CD4-positive, alpha-beta T cell (primary cell): ENCODE measurements at regions of chr11 and their contacts with region 1.

Region 1: DNA sequence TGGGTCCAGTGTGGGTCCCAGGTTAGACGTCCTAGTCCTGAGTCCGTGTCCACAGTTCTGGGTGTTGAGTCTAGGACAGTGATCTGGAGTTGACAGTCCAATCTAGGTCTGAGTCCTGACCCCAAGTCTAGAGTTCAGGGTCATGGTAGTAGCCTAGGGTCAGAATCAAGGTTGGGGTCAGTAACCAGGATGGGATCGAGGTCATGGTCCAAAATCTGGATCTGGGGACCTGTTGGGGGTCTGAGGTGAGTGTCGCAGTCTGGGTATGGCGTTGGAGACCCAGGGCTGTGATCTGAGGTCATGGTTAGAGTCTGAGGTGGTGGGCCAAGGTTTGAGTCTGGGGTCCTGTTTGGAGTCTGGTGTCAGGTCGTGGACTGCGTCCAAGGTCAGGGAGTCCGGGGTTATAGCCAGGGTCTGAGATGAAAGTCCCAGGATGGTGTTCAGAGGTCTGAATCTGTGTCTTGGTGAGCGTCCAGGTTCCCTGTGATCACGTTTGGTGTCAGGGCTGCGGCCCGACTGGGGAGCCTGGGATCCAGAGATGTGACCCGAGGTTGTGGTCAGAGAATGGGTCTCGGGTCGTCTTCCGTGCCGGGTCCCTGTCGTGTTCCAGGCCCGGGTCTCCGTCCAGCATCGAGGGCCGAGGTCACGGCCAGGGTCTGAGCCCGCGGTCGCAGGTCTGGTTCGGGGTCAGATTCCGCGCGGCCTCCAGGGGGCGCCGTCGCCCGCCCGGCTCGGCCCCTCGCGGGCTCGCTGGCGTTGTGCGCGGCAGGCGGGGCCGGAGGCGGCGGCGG is 445 bp upstream of the GRK2 start:
- DNase-seq: peak; percentile 58 to 92 (median 76)
- ATAC-seq: peak; percentile 47
- H3K4me3 ChIP-seq: peak overlapping the region; percentile 27
- H3K4me3 Mint-ChIP-seq: peak overlapping the region; percentile 85
- H3K27ac ChIP-seq: peak overlapping the region; percentile 15 to 33
- H3K27ac Mint-ChIP-seq: peak overlapping the region; percentile 88
- H3K4me1 ChIP-seq: peaks cover 70% of the 10 kb centered on the region
- H3K4me1 Mint-ChIP-seq: peaks cover 74% of the 10 kb centered on the region
- H3K27me3 ChIP-seq: no peaks in the 10 kb centered on the region
- H3K27me3 Mint-ChIP-seq: no peaks in the 10 kb centered on the region
- CTCF ChIP-seq: peak; percentile 59

Region 2: DNA sequence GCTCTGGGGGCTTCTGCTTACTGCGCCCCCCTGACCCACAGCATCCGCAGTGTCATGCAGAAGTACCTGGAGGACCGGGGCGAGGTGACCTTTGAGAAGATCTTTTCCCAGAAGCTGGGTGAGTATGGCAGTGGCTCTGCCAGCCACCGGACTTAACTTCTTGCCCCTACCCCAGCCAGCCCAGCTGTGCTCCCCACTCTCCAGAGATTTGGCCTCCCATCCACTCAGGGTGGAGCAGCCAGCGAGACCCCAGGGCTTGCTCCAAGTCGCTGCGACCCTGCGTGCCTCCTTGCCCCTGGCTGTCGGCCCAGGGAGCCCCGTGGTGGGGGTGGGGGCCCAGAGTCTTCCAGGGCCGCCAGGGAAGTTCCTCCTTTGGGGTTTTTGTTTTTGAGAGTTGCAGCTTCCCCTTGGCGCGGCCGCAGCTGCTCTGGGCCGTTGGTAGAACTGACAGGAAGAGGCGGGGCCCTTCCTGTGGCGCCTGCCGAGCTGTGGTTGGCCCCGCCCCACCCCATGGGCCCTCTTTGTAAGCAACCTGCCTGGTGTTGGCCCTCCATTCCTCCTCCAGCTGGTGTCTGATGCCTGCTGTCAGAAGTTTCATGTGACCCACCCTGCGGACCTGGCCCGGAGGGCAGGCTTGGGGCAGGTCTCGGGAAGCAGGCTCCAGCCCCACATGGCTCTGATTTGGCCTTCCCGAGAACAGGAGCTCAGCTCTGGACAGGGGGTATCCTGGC is 11.6 kb after region 1 on chr11:
- CTCF ChIA-PET with region 1: interaction called, 8 read pairs
- POLR2A ChIA-PET with region 1: interaction called, 65 read pairs
- intact Hi-C with region 1: loop called (anchors 1 kb)
- DNase-seq: peak; percentile 81 to 98 (median 93)
- ATAC-seq: peak; percentile 93
- H3K4me3 ChIP-seq: peak overlapping the region; percentile 43
- H3K4me3 Mint-ChIP-seq: peak overlapping the region; percentile 91
- H3K27ac ChIP-seq: peak overlapping the region; percentile 76 to 97
- H3K27ac Mint-ChIP-seq: peak overlapping the region; percentile 90
- H3K4me1 ChIP-seq: peaks cover 100% of the 10 kb centered on the region
- H3K4me1 Mint-ChIP-seq: peaks cover 64% of the 10 kb centered on the region
- H3K27me3 ChIP-seq: no peaks in the 10 kb centered on the region
- H3K27me3 Mint-ChIP-seq: no peaks in the 10 kb centered on the region
- CTCF ChIP-seq: no peak

Region 3: GRCh38 chr11:67288452-67289225 is 22.8 kb after region 1 on chr11:
- CTCF ChIA-PET with region 1: interaction called, 22 read pairs
- POLR2A ChIA-PET with region 1: interaction called, 188 read pairs
- intact Hi-C with region 1: loop called (anchors 1 kb)
- DNase-seq: peak; percentile 79 to 95 (median 89)
- ATAC-seq: peak; percentile 63
- H3K4me3 ChIP-seq: peak overlapping the region; percentile 91
- H3K4me3 Mint-ChIP-seq: peak overlapping the region; percentile 83
- H3K27ac ChIP-seq: peak overlapping the region; percentile 90 to 95
- H3K27ac Mint-ChIP-seq: peak overlapping the region; percentile 90
- H3K4me1 ChIP-seq: peaks cover 86% of the 10 kb centered on the region
- H3K4me1 Mint-ChIP-seq: peaks cover 49% of the 10 kb centered on the region
- H3K27me3 ChIP-seq: no peaks in the 10 kb centered on the region
- H3K27me3 Mint-ChIP-seq: no peaks in the 10 kb centered on the region
- CTCF ChIP-seq: peak; percentile 48

Region 4: GRCh38 chr11:67303132-67303834 is 37.5 kb after region 1 on chr11 and contains the start of gene SSH3:
- CTCF ChIA-PET with region 1: interaction called, 4 read pairs
- POLR2A ChIA-PET with region 1: interaction called, 14 read pairs
- intact Hi-C with region 1: no loop called
- DNase-seq: peak in 8 of 14 experiments; percentile 30 to 66 (median 48)
- ATAC-seq: peak; percentile 62
- H3K4me3 ChIP-seq: peak within 1 kb of the TSS; percentile 62
- H3K4me3 Mint-ChIP-seq: peak within 1 kb of the TSS; percentile 65
- H3K27ac ChIP-seq: peak within 1 kb of the TSS in 1 of 2 donors; percentile 41
- H3K27ac Mint-ChIP-seq: no peak within 1 kb of the TSS
- H3K4me1 ChIP-seq: peaks cover 33% of the 10 kb centered on the region
- H3K4me1 Mint-ChIP-seq: peaks cover 5% of the 10 kb centered on the region
- H3K27me3 ChIP-seq: no peaks in the 10 kb centered on the region
- H3K27me3 Mint-ChIP-seq: no peaks in the 10 kb centered on the region
- CTCF ChIP-seq: no peak
- total RNA-seq, gene SSH3: 8.5 to 8.8 TPM

Region 5: GRCh38 chr11:67345920-67346799 is 80.3 kb after region 1 on chr11:
- CTCF ChIA-PET with region 1: interaction called, 7 read pairs
- POLR2A ChIA-PET with region 1: interaction called, 14 read pairs
- intact Hi-C with region 1: no loop called
- DNase-seq: peak in 4 of 14 experiments; percentile 39 to 65 (median 55)
- ATAC-seq: peak; percentile 71
- H3K4me3 ChIP-seq: no peak overlapping the region
- H3K4me3 Mint-ChIP-seq: peak overlapping the region; percentile 57
- H3K27ac ChIP-seq: peak overlapping the region in 1 of 2 donors; percentile 18
- H3K27ac Mint-ChIP-seq: peak overlapping the region; percentile 78
- H3K4me1 ChIP-seq: peaks cover 40% of the 10 kb centered on the region
- H3K4me1 Mint-ChIP-seq: peaks cover 63% of the 10 kb centered on the region
- H3K27me3 ChIP-seq: no peaks in the 10 kb centered on the region
- H3K27me3 Mint-ChIP-seq: no peaks in the 10 kb centered on the region
- CTCF ChIP-seq: peak; percentile 81

Region 6: GRCh38 chr11:67382276-67383136 is 116.7 kb after region 1 on chr11:
- CTCF ChIA-PET with region 1: interaction called, 16 read pairs
- POLR2A ChIA-PET with region 1: interaction called, 4 read pairs
- intact Hi-C with region 1: loop called (anchors 1 to 2 kb)
- DNase-seq: peak; percentile 72 to 90 (median 82)
- ATAC-seq: peak; percentile 99
- H3K4me3 ChIP-seq: no peak overlapping the region
- H3K4me3 Mint-ChIP-seq: no peak overlapping the region
- H3K27ac ChIP-seq: no peak overlapping the region
- H3K27ac Mint-ChIP-seq: no peak overlapping the region
- H3K4me1 ChIP-seq: peaks cover 15% of the 10 kb centered on the region
- H3K4me1 Mint-ChIP-seq: peaks cover 5% of the 10 kb centered on the region
- H3K27me3 ChIP-seq: no peaks in the 10 kb centered on the region
- H3K27me3 Mint-ChIP-seq: peaks cover 4% of the 10 kb centered on the region
- CTCF ChIP-seq: peak; percentile 92